ENCODE measurements at regions of chr10 and their contacts with region 1.

Region 1: DNA sequence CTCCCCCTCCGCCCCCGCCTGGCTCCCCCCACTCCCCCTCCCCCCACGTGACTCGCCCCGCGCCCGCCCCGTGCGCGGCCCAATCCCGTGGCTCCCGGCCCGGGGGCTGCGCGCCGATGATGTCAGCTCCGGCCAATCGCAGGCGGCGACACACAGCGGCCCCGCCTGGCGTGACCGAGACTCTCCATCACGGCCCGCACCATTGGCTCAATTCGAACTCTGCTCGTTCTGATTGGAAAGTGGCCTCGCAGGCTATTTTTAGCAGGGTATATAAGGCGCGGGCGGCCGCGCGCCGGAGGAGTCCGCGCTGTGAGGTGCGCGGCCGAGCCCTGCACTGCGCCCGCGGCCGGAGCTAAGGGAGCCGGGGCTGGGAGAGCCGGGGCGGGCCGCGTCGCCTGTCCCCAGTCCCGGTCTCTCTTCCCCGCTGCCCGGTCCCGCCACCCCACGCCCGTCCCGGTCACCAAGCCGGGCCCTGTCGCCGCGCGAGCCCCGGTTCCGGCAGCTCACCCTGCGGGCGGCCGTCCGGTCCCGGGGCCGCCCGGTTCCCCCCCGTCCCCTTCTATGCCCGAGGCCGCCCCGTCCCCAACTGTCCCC is 345 bp upstream of the KLF6 start:
- DNase-seq: peak; percentile 98
- ATAC-seq: peak; percentile 71
- H3K4me3 Mint-ChIP-seq: peak overlapping the region; percentile 91
- H3K27ac Mint-ChIP-seq: peak overlapping the region; percentile 98
- H3K4me1 Mint-ChIP-seq: peaks cover 33% of the 10 kb centered on the region
- H3K27me3 Mint-ChIP-seq: no peaks in the 10 kb centered on the region
- CTCF ChIP-seq: no peak

Region 2: GRCh38 chr10:3172446-3173170 is 612.7 kb before region 1 on chr10 and contains the start of gene PITRM1:
- CTCF ChIA-PET with region 1: no interaction called
- POLR2A ChIA-PET with region 1: interaction called, 7 read pairs
- intact Hi-C with region 1: loop called (anchors 2 kb)
- DNase-seq: peak; percentile 96
- ATAC-seq: peak; percentile 92
- H3K4me3 Mint-ChIP-seq: peak within 1 kb of the TSS; percentile 85
- H3K27ac Mint-ChIP-seq: peak within 1 kb of the TSS; percentile 91
- H3K4me1 Mint-ChIP-seq: peaks cover 23% of the 10 kb centered on the region
- H3K27me3 Mint-ChIP-seq: no peaks in the 10 kb centered on the region
- CTCF ChIP-seq: no peak
- total RNA-seq, gene PITRM1: 59.6 and 60.7 TPM in 2 replicates

Region 3: GRCh38 chr10:3740157-3740871 is 45.0 kb before region 1 on chr10:
- CTCF ChIA-PET with region 1: no interaction called
- POLR2A ChIA-PET with region 1: interaction called, 13 read pairs
- intact Hi-C with region 1: no loop called
- DNase-seq: no peak
- ATAC-seq: peak; percentile 42
- H3K4me3 Mint-ChIP-seq: no peak overlapping the region
- H3K27ac Mint-ChIP-seq: no peak overlapping the region
- H3K4me1 Mint-ChIP-seq: peaks cover 14% of the 10 kb centered on the region
- H3K27me3 Mint-ChIP-seq: no peaks in the 10 kb centered on the region
- CTCF ChIP-seq: no peak

Region 4: DNA sequence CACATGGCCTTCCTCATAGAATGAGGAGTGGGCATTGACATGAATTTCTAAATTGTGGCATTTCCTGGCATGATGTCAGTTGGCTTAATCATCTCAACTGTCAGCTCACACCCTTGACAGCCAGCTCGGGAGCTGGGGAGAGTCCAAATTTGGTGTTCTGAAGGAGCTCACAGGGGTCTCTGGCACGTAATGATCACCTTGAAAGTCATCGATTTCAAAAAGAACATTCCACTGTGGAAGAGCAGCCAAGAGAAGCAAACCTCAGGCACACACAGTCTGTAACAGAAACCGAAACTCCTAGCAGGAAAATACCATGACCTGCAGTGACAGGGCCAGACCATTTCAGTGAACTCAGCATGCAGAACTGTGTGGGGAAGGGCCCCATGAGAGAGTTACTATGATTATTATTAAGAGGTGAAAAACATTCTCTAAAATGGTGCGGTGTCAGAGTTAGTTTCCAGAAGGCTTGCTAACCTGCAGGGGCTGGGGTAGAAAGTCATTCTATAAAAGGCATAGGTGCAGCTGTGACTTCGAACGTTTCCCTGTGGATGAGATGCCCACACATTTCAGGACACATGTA is 26.0 kb after region 1 on chr10:
- CTCF ChIA-PET with region 1: interaction called, 3 read pairs
- POLR2A ChIA-PET with region 1: interaction called, 144 read pairs
- intact Hi-C with region 1: loop called (anchors 1 kb)
- DNase-seq: peak; percentile 29
- ATAC-seq: peak; percentile 95
- H3K4me3 Mint-ChIP-seq: peak overlapping the region; percentile 74
- H3K27ac Mint-ChIP-seq: peak overlapping the region; percentile 84
- H3K4me1 Mint-ChIP-seq: peaks cover 52% of the 10 kb centered on the region
- H3K27me3 Mint-ChIP-seq: no peaks in the 10 kb centered on the region
- CTCF ChIP-seq: no peak

Region 5: DNA sequence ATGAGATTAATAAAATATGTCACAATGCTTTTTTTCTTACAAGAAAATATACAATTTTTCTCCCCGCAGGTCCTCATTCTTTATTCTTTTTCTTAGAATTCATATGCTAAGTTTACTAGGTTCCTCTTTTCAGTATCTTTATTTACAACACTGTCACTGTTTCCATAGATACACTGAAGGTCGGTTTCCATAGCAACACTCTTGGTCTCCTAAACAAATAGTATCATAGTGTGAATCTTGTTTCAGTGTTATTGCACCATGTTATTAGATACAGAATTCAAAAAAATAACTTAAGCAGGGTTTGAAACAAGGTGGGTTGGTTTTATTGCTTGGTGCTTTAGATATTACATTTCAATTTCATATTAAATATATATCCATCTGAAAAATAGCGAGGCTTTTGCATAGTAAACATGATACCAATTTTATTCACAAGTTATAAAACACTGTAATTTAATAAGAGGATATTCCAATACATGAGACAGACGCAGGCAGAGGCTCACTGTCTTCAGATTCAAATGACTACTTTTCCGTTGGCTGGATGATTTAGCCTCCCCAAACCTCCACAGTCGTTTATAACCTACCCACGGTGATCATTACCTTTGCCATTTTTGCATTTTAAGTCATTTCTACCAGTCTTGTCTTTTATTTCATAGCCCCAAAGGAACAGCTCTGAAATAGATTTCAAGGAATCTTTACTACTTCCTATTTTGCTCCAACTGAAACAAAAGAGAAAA is 88.5 kb after region 1 on chr10:
- CTCF ChIA-PET with region 1: interaction called, 3 read pairs
- POLR2A ChIA-PET with region 1: interaction called, 156 read pairs
- intact Hi-C with region 1: loop called (anchors 1 kb)
- DNase-seq: no peak
- ATAC-seq: peak; percentile 43
- H3K4me3 Mint-ChIP-seq: peak overlapping the region; percentile 45
- H3K27ac Mint-ChIP-seq: peak overlapping the region; percentile 96
- H3K4me1 Mint-ChIP-seq: peaks cover 60% of the 10 kb centered on the region
- H3K27me3 Mint-ChIP-seq: no peaks in the 10 kb centered on the region
- CTCF ChIP-seq: no peak

Region 6: GRCh38 chr10:4013651-4014121 is 228.3 kb after region 1 on chr10:
- CTCF ChIA-PET with region 1: no interaction called
- POLR2A ChIA-PET with region 1: interaction called, 16 read pairs
- intact Hi-C with region 1: loop called (anchors 10 kb)
- DNase-seq: peak; percentile 32
- ATAC-seq: peak; percentile 81
- H3K4me3 Mint-ChIP-seq: peak overlapping the region; percentile 53
- H3K27ac Mint-ChIP-seq: peak overlapping the region; percentile 83
- H3K4me1 Mint-ChIP-seq: peaks cover 33% of the 10 kb centered on the region
- H3K27me3 Mint-ChIP-seq: no peaks in the 10 kb centered on the region
- CTCF ChIP-seq: no peak

Region 7: GRCh38 chr10:4121502-4122380 is 336.4 kb after region 1 on chr10:
- CTCF ChIA-PET with region 1: no interaction called
- POLR2A ChIA-PET with region 1: interaction called, 137 read pairs
- intact Hi-C with region 1: no loop called
- DNase-seq: peak; percentile 30
- ATAC-seq: peak; percentile 72
- H3K4me3 Mint-ChIP-seq: peak overlapping the region; percentile 76
- H3K27ac Mint-ChIP-seq: peak overlapping the region; percentile 74
- H3K4me1 Mint-ChIP-seq: peaks cover 37% of the 10 kb centered on the region
- H3K27me3 Mint-ChIP-seq: no peaks in the 10 kb centered on the region
- CTCF ChIP-seq: no peak